ENCODE measurements at regions of chr5 and their contacts with region 1.

Region 1: DNA sequence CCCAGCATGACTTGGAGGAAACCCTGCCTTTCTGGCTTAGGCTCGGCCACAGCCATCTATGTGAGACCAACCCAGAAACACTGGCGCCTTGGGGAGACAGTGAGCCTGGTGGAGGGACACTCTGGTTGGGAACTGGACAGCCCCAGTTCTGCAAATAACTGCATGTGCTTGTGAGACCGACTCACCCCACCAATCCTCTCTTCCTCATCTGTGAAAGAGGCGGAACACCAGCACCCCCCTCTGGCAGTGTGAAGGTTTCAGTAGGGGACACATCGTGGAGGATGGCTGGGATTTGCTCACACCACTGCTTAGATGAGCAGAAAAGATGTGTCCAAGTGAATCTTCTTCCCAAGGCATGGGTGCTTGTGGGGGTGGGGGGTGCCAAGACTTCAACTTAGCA is 43.4 kb upstream of the N4BP3 start:
- DNase-seq: peak in 1 of 6 donors; percentile 37
- ATAC-seq: peak in 3 of 4 donors; percentile 81 to 83 (median 81)
- H3K4me3 ChIP-seq: no peak overlapping the region
- H3K27ac ChIP-seq: no peak overlapping the region
- H3K4me1 ChIP-seq: no peaks in the 10 kb centered on the region
- H3K27me3 ChIP-seq: peaks cover 0 to under 1% (median 0%) of the 10 kb centered on the region in 4 donors
- CTCF ChIP-seq: no peak

Region 2: DNA sequence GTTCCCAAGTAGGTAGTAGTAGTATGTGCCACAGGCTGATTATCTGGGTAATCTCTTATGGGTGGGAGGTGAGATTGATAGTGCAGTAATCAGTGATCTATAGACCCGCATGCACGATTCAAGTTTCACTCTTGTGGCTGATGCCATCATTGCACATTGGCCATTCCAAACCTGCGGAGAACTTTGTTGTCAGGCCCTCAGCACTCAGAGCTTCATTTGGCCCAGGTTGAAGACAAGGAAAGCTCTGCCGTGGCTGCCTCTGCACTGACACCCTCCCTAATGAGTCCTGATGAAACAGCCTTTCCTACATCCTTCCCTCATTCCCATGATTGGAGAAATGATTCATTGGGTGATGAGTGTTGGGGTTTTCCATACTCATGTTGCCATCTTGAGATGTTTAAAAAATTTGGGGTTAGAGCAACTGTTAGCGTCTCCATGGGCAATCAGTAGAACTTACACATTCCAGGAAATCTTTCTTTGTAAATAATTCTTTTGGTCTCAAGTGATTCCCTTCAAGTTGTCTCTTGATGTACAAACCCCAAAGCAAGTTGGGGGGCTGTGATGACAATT is 96.8 kb before region 1 on chr5:
- intact Hi-C with region 1: loop called in 1 of 3 experiments (anchors 10 kb)
- DNase-seq: no peak
- ATAC-seq: no peak
- H3K4me3 ChIP-seq: no peak overlapping the region
- H3K27ac ChIP-seq: no peak overlapping the region
- H3K4me1 ChIP-seq: no peaks in the 10 kb centered on the region
- H3K27me3 ChIP-seq: peaks cover 0 to 5% (median 0%) of the 10 kb centered on the region in 4 donors
- CTCF ChIP-seq: no peak

Region 3: GRCh38 chr5:178449163-178450070 is 379.5 kb after region 1 on chr5:
- intact Hi-C with region 1: no loop called
- DNase-seq: no peak
- ATAC-seq: no peak
- H3K4me3 ChIP-seq: no peak overlapping the region
- H3K27ac ChIP-seq: no peak overlapping the region
- H3K4me1 ChIP-seq: no peaks in the 10 kb centered on the region
- H3K27me3 ChIP-seq: no peaks in the 10 kb centered on the region
- CTCF ChIP-seq: no peak

Measured in pancreas (tissue), 10 donors.